MCF 10A (cell line): ENCODE measurements at regions of chr4 and their contacts with region 1.

Region 1: GRCh38 chr4:17614416-17615299 is at the start of gene MED28:
- DNase-seq: peak; percentile 96
- H3K4me3 Mint-ChIP-seq: peak within 1 kb of the TSS; percentile 99
- H3K27ac Mint-ChIP-seq: peak within 1 kb of the TSS; percentile 95
- H3K4me1 Mint-ChIP-seq: peaks cover 21% of the 10 kb centered on the region
- H3K27me3 Mint-ChIP-seq: no peaks in the 10 kb centered on the region
- CTCF ChIP-seq: no peak
- total RNA-seq, gene MED28: 31.8 and 32.1 TPM in 2 replicates

Region 2: GRCh38 chr4:17576932-17577665 is 37.6 kb before region 1 on chr4 and contains the start of gene LAP3:
- CTCF ChIA-PET with region 1: interaction called, 3 read pairs
- POLR2A ChIA-PET with region 1: interaction called, 15 read pairs
- intact Hi-C with region 1: loop called (anchors 5 kb)
- DNase-seq: peak; percentile 94
- H3K4me3 Mint-ChIP-seq: peak within 1 kb of the TSS; percentile 91
- H3K27ac Mint-ChIP-seq: peak within 1 kb of the TSS; percentile 94
- H3K4me1 Mint-ChIP-seq: peaks cover 12% of the 10 kb centered on the region
- H3K27me3 Mint-ChIP-seq: no peaks in the 10 kb centered on the region
- CTCF ChIP-seq: no peak
- total RNA-seq, gene LAP3: 31.0 and 45.0 TPM in 2 replicates

Region 3: GRCh38 chr4:17597517-17597916 is 17.1 kb before region 1 on chr4:
- CTCF ChIA-PET with region 1: interaction called, 7 read pairs
- POLR2A ChIA-PET with region 1: interaction called, 10 read pairs
- intact Hi-C with region 1: no loop called
- DNase-seq: peak; percentile 35
- H3K4me3 Mint-ChIP-seq: no peak overlapping the region
- H3K27ac Mint-ChIP-seq: no peak overlapping the region
- H3K4me1 Mint-ChIP-seq: no peaks in the 10 kb centered on the region
- H3K27me3 Mint-ChIP-seq: no peaks in the 10 kb centered on the region
- CTCF ChIP-seq: peak; percentile 32

Region 4: DNA sequence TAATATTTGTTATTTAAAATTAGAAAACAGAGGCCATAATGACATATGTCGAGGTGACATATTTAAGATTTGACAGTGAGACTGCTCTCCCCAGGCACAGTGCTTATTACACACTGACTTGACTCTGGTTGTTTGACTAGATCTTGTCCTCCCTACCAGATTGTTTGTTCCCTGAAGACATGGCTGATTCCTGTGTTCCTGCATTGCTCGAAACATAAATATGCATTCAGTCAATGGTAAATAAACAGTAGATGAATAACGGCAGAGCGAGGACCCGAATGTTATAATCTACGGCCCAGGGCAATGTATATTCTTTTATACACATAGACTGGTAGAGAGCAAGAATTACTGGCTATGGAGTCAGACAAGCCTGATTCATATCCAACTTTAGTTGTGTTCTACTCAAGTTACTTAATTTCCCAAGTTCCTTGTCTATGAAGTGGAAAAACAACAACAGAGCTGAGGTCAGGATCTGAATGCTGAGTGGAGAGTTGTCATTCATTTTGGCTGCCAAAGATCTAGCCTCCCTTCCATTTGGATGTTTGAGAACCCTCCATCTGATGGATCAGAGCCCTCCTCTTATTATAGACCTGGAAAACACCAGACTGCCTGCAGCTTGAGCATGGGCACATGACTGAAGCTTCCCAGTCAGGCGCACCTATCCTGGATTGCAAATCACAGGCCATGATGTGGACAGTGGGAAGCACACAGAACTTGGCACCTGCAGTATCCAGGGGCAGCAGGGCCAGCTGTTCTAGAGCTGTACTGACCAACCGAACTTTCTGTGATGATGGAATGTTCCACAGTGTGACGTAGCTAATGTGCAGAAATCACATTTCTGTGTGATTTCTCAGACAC is 86.6 kb after region 1 on chr4:
- CTCF ChIA-PET with region 1: no interaction called
- POLR2A ChIA-PET with region 1: no interaction called
- intact Hi-C with region 1: no loop called
- DNase-seq: no peak
- H3K4me3 Mint-ChIP-seq: no peak overlapping the region
- H3K27ac Mint-ChIP-seq: no peak overlapping the region
- H3K4me1 Mint-ChIP-seq: no peaks in the 10 kb centered on the region
- H3K27me3 Mint-ChIP-seq: peaks cover 20% of the 10 kb centered on the region
- CTCF ChIP-seq: no peak

Region 5: GRCh38 chr4:17934286-17934685 is 319.6 kb after region 1 on chr4:
- CTCF ChIA-PET with region 1: no interaction called
- POLR2A ChIA-PET with region 1: no interaction called
- intact Hi-C with region 1: no loop called
- DNase-seq: no peak
- H3K4me3 Mint-ChIP-seq: no peak overlapping the region
- H3K27ac Mint-ChIP-seq: no peak overlapping the region
- H3K4me1 Mint-ChIP-seq: peaks cover 15% of the 10 kb centered on the region
- H3K27me3 Mint-ChIP-seq: no peaks in the 10 kb centered on the region
- CTCF ChIP-seq: no peak

Region 6: DNA sequence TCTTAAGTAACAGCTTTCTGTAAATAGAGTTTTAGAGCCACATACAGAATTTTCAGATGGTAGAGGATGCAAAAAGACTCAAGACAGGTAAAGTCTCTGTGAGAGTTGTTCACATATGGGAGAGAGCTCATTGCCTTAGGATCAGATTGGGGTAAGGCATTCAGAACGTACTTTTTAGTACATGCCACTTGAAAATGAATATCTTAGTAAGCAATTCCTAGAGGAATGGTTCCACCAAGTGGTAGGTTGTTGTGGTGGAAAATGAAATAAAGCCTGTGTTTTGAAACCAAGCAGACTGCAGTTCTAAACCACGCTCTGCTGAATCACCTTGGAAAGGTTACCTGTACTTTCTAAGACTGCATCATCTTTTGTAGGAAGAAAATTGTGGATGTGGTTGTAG is 953.9 kb after region 1 on chr4:
- CTCF ChIA-PET with region 1: no interaction called
- POLR2A ChIA-PET with region 1: no interaction called
- intact Hi-C with region 1: loop called (anchors 1 kb)
- DNase-seq: no peak
- H3K4me3 Mint-ChIP-seq: no peak overlapping the region
- H3K27ac Mint-ChIP-seq: no peak overlapping the region
- H3K4me1 Mint-ChIP-seq: peaks cover 7% of the 10 kb centered on the region
- H3K27me3 Mint-ChIP-seq: no peaks in the 10 kb centered on the region
- CTCF ChIP-seq: peak; percentile 23